ENCODE measurements at regions of chr2 and their contacts with region 1.

Region 1: GRCh38 chr2:148739454-148740105 is 95.0 kb downstream of the EPC2 start:
- DNase-seq: no peak
- ATAC-seq: peak in 2 of 4 experiments; percentile 46 to 65
- H3K4me3 ChIP-seq: no peak overlapping the region
- H3K4me3 Mint-ChIP-seq: peak overlapping the region in 2 of 3 donors; percentile 7 to 21
- H3K27ac ChIP-seq: no peak overlapping the region
- H3K27ac Mint-ChIP-seq: peak overlapping the region in 1 of 2 donors; percentile 23
- H3K4me1 ChIP-seq: peaks cover 0 to 20% of the 10 kb centered on the region in 2 experiments
- H3K4me1 Mint-ChIP-seq: peaks cover 63 to 82% (median 75%) of the 10 kb centered on the region in 3 donors
- H3K27me3 ChIP-seq: no peaks in the 10 kb centered on the region
- H3K27me3 Mint-ChIP-seq: no peaks in the 10 kb centered on the region

Region 2: DNA sequence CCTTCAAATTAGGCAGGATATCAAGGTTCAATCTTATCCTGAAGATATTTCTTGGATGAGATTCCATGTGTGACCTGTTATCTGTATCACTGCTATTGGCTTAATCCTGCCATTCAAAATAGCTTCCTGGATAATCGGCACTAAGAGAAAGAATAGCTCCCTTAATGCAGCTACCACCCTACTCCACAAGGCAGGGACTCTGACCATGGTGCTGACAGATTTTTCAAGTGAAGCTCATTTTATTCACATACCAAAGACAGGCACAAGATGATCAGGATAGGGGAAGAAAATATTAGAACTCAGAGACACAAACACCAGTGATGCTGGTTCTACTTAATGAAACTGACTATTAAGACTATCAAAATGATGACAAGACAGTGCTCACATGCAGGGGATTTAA is 793.9 kb before region 1 on chr2:
- CTCF ChIA-PET with region 1: interaction called in 1 of 2 experiments, 16 read pairs
- POLR2A ChIA-PET with region 1: no interaction called
- DNase-seq: no peak
- ATAC-seq: no peak
- H3K4me3 ChIP-seq: no peak overlapping the region
- H3K4me3 Mint-ChIP-seq: no peak overlapping the region
- H3K27ac ChIP-seq: no peak overlapping the region
- H3K27ac Mint-ChIP-seq: no peak overlapping the region
- H3K4me1 ChIP-seq: no peaks in the 10 kb centered on the region
- H3K4me1 Mint-ChIP-seq: no peaks in the 10 kb centered on the region
- H3K27me3 ChIP-seq: no peaks in the 10 kb centered on the region
- H3K27me3 Mint-ChIP-seq: no peaks in the 10 kb centered on the region

Measured in T-cell (primary cell).